Aorta (tissue), 5 donors: ENCODE measurements at regions of chr11 and their contacts with region 1.

Region 1: DNA sequence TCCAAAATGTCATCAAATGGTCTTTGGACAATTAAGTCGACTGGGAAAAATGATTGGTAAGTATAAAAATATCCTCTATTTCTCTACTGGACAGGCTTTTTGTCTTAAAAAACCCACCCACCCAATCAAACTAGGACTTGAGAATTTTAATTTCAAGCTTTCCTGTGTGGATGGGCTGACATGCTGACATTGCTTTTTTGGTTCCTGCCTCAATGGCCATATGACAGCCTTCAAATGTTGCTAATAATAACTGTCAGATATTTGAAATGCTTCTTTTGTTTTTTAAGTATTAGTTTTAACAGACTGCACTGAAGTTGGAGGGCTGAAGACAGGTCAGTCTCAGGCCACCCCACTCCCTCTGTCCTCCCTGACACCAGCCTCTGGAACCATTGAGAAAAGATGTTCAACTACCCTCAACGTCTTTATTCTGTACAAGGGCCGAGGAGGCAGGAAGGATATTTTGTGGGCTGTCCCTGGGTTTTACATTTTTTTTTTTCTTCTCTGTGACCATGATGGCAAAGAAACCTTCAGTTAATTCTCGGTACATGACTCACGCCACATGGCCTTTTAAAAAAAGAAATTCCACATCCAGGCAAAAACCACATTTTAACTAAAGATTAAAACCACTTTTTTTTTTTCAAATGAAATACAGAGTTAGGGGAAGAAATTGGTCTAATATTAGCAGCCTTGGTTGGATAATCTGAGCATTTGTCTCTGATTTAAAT is 130.4 kb downstream of the SLC1A2 start:
- DNase-seq: no peak
- ATAC-seq: peak; percentile 41
- H3K4me3 ChIP-seq: no peak overlapping the region
- H3K27ac ChIP-seq: peak overlapping the region; percentile 2 to 89
- H3K4me1 ChIP-seq: peaks cover 0 to 2% of the 10 kb centered on the region in 2 donors
- H3K27me3 ChIP-seq: no peaks in the 10 kb centered on the region

Region 2: DNA sequence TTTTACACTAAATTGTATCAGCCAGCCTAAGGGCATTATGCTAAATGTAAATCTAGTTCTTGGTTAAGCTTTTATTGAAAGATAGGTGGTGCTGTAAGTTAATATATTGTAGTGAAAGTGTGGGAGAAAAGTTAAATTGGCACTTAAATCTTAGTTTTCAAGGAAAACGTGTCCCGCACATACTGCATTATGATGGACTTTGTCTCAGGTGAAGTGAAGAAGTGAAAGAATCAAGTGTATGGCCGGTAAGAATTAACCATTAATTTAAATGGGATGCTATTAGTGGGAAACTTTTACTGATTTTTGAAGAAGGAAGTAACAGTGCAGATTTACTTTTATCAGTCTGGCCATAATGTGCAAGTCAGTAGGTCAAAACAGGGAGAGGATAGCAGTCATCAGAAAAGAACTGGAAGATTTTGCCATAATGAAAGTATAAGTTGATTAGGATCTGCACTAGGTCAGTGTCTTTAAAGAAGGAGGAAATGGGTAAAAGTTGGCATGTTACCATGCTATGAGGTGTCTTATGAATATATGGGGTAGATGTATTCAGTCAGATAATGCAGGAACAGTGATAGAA is 290.9 kb before region 1 on chr11:
- intact Hi-C with region 1: no loop called
- DNase-seq: no peak
- ATAC-seq: peak; percentile 67
- H3K4me3 ChIP-seq: no peak overlapping the region
- H3K27ac ChIP-seq: no peak overlapping the region
- H3K4me1 ChIP-seq: no peaks in the 10 kb centered on the region
- H3K27me3 ChIP-seq: no peaks in the 10 kb centered on the region

Region 3: GRCh38 chr11:35246745-35247144 is 42.2 kb before region 1 on chr11:
- intact Hi-C with region 1: loop called (anchors 5 kb)
- DNase-seq: no peak
- ATAC-seq: peak; percentile 73
- H3K4me3 ChIP-seq: no peak overlapping the region
- H3K27ac ChIP-seq: peak overlapping the region; percentile 98 to 99
- H3K4me1 ChIP-seq: no peaks in the 10 kb centered on the region
- H3K27me3 ChIP-seq: no peaks in the 10 kb centered on the region

Region 4: DNA sequence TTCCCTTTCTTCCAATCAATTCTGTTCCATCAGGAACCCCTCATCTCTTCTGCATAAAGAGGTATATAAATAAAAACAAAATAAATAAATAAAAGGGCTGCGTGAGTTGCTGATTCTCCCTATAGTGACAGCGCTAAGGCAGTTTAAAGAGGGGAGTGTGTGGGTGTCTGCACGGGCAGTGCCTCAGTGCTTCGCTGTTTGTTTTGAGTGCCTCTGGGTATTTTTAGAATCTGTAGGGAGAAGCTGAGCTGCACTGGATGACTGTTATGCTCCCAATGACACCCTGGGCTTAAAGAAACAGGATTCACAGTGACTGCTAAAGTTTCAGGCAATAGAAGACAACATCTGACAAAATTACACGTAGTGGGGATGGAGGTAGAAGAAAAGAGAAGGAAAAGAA is 91.6 kb after region 1 on chr11:
- intact Hi-C with region 1: loop called in 1 of 2 experiments (anchors 5 kb)
- DNase-seq: no peak
- ATAC-seq: no peak
- H3K4me3 ChIP-seq: no peak overlapping the region
- H3K27ac ChIP-seq: no peak overlapping the region
- H3K4me1 ChIP-seq: no peaks in the 10 kb centered on the region
- H3K27me3 ChIP-seq: no peaks in the 10 kb centered on the region